AG04450 (cell line): ENCODE measurements at regions of chr10 and their contacts with region 1.

Region 1: GRCh38 chr10:109883859-109884771 is 39.2 kb downstream of the XPNPEP1 start:
- DNase-seq: peak; percentile 77
- H3K4me3 ChIP-seq: no peak overlapping the region
- H3K27ac ChIP-seq: peak overlapping the region; percentile 63
- H3K27me3 ChIP-seq: no peaks in the 10 kb centered on the region
- CTCF ChIP-seq: peak; percentile 97

Region 2: DNA sequence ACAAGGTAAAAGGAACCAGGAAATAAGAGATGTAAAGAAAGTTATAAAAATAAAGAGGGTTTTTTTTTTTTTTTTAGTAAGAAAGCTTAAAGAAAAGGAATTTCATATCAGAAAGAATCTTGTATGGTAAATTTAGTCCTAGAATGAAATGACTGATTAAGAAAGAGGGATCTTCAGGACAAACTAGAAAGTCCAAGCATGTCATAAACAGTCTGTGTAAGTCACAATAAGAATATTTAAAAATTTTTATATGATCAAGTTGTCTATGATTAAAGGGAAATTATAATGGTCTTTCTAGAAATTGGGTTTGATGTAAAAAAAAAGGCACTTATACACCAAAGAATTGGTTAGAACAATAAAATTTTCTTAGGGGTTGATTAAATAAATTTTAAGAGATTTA is 250.3 kb before region 1 on chr10:
- CTCF ChIA-PET with region 1: no interaction called
- POLR2A ChIA-PET with region 1: no interaction called
- DNase-seq: no peak
- H3K4me3 ChIP-seq: no peak overlapping the region
- H3K27ac ChIP-seq: no peak overlapping the region
- H3K27me3 ChIP-seq: no peaks in the 10 kb centered on the region
- CTCF ChIP-seq: no peak

Region 3: DNA sequence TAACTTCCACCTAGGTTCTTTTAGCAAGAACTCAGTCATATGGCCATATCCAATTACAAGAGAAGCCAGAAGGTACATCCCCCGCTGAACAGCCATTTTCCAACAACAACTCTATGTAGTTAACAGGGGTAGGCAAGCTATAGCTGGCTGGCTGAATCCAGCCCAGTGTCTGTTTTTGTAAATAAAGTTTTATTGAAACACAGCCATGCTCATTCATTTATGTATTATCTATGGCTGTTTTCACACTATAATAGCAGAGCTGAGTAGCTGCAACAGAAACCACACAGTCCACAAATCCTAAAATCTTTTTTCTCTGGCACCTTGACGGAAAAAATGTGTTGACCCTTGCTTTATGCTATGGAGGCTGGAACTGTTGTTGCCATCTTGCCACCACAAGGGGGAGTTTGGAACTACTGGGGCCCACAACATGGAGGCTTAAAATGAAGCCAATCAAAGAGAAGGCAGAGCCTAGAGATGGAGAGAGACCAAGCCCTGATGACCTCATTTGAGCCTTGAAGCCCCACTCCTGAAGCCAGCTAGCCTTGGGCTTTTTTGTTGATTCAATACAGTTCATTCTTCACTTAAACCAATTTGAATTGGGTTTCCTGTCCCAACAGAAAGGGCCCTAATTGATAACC is 72.5 kb after region 1 on chr10:
- CTCF ChIA-PET with region 1: interaction called, 11 read pairs
- POLR2A ChIA-PET with region 1: no interaction called
- DNase-seq: no peak
- H3K4me3 ChIP-seq: no peak overlapping the region
- H3K27ac ChIP-seq: no peak overlapping the region
- H3K27me3 ChIP-seq: no peaks in the 10 kb centered on the region
- CTCF ChIP-seq: peak; percentile 61

Region 4: DNA sequence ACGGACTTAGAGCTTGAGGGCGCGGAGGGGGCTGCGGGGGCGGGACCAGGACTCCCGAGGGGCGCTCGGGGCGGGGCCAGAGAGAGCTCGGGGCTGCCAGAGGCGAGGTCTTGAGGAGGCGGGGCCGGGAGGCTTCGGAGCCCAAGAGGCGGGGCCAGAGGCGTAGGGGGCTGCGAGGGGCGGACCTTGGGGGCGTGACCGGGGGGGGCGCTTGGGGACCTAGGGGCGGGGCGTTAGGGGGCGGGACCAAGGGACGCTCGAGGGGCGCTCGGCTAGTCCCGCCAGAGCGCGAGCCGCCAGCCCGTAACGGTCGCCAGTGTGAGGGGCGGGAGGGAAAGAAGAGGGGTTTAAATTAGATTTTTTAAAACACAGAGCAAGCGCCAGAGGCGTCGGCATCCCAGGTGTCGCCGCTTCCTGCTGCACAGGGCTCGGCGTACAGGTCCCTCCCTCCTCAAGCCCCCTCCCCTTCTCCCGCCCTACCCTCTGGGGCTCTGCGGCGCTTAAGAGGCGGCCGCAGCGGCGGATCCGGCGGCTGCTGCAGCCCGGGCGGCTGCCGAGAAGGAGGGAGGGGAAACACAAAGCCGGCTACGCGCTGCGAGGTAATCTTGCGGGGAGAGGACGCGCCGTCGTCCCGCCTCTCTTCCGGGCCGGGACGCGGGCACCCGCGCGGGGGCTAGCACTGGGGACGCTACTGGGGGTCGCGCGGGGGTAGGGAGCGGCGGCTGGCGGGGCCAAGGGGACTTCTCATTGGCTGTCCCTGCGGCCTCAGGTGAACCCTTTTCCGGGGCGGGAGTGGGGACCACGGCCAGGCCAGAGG is 123.8 kb after region 1 on chr10 and contains the start of gene ADD3:
- CTCF ChIA-PET with region 1: interaction called, 23 read pairs
- POLR2A ChIA-PET with region 1: interaction called, 15 read pairs
- DNase-seq: peak; percentile 86
- H3K4me3 ChIP-seq: peak within 1 kb of the TSS; percentile 77
- H3K27ac ChIP-seq: peak within 1 kb of the TSS; percentile 83
- H3K27me3 ChIP-seq: no peaks in the 10 kb centered on the region
- CTCF ChIP-seq: no peak
- polyA plus RNA-seq, gene ADD3: 161 and 192 TPM in 2 replicates

Region 5: DNA sequence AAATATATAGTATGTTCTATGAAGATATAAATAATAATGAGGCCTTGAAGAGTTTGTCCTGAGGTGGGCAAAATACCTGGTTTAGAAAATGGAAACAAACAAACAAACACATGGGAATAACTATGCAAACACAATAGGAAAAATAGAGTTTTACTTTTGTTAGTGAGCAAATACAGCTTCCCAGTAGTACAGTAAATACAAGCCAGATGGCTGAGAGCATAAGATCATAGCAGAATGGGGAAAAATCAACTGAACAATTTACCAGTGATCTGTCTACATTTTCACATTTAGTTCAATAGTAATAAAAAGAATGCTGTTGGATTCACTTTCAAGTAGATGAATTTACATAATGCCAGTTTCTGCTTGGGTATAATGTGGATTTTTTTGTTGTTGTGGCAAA is 168.8 kb after region 1 on chr10:
- CTCF ChIA-PET with region 1: interaction called, 20 read pairs
- POLR2A ChIA-PET with region 1: no interaction called
- DNase-seq: no peak
- H3K4me3 ChIP-seq: no peak overlapping the region
- H3K27ac ChIP-seq: no peak overlapping the region
- H3K27me3 ChIP-seq: no peaks in the 10 kb centered on the region
- CTCF ChIP-seq: no peak

Region 6: DNA sequence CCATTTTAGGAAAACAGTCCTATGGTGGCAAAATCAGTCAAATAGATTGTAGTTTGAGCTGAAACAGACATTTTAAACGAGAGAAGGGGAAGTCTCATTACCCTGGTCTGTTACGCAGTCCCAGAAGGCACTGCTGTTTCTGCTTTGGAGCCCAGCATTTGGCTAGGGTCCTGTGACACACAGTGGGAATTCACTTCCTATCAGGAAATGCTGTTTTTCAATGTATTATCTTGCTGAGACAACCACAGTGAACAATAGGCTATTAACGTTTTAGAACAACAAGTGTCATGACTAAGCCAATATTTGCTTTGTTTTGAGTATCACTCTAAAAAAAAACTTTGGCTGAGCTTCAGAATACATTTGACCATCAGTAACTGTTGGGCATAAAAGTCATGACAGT is 197.8 kb after region 1 on chr10:
- CTCF ChIA-PET with region 1: interaction called, 24 read pairs
- POLR2A ChIA-PET with region 1: no interaction called
- DNase-seq: no peak
- H3K4me3 ChIP-seq: no peak overlapping the region
- H3K27ac ChIP-seq: no peak overlapping the region
- H3K27me3 ChIP-seq: no peaks in the 10 kb centered on the region
- CTCF ChIP-seq: no peak

Region 7: GRCh38 chr10:110137142-110137545 is 253.0 kb after region 1 on chr10:
- CTCF ChIA-PET with region 1: interaction called, 52 read pairs
- POLR2A ChIA-PET with region 1: no interaction called
- DNase-seq: peak; percentile 48
- H3K4me3 ChIP-seq: no peak overlapping the region
- H3K27ac ChIP-seq: no peak overlapping the region
- H3K27me3 ChIP-seq: no peaks in the 10 kb centered on the region
- CTCF ChIP-seq: peak; percentile 76

Region 8: GRCh38 chr10:110634527-110635209 is 750.6 kb after region 1 on chr10:
- CTCF ChIA-PET with region 1: no interaction called
- POLR2A ChIA-PET with region 1: no interaction called
- DNase-seq: no peak
- H3K4me3 ChIP-seq: no peak overlapping the region
- H3K27ac ChIP-seq: no peak overlapping the region
- H3K27me3 ChIP-seq: peaks cover 11% of the 10 kb centered on the region
- CTCF ChIP-seq: no peak